Left ventricle myocardium inferior (tissue), 1 donor: ENCODE measurements at regions of chr21 and their contacts with region 1.

Region 1: GRCh38 chr21:31107871-31108270 is 69.6 kb upstream of the KRTAP19-8 start:
- DNase-seq: no peak
- H3K4me3 ChIP-seq: no peak overlapping the region
- H3K27ac ChIP-seq: peak overlapping the region; percentile 30
- H3K4me1 ChIP-seq: no peaks in the 10 kb centered on the region
- H3K27me3 ChIP-seq: peaks cover 38% of the 10 kb centered on the region
- CTCF ChIP-seq: no peak

Region 2: GRCh38 chr21:30882866-30883597 is 224.8 kb before region 1 on chr21:
- intact Hi-C with region 1: no loop called
- DNase-seq: no peak
- H3K4me3 ChIP-seq: no peak overlapping the region
- H3K27ac ChIP-seq: no peak overlapping the region
- H3K4me1 ChIP-seq: no peaks in the 10 kb centered on the region
- H3K27me3 ChIP-seq: no peaks in the 10 kb centered on the region
- CTCF ChIP-seq: no peak

Region 3: DNA sequence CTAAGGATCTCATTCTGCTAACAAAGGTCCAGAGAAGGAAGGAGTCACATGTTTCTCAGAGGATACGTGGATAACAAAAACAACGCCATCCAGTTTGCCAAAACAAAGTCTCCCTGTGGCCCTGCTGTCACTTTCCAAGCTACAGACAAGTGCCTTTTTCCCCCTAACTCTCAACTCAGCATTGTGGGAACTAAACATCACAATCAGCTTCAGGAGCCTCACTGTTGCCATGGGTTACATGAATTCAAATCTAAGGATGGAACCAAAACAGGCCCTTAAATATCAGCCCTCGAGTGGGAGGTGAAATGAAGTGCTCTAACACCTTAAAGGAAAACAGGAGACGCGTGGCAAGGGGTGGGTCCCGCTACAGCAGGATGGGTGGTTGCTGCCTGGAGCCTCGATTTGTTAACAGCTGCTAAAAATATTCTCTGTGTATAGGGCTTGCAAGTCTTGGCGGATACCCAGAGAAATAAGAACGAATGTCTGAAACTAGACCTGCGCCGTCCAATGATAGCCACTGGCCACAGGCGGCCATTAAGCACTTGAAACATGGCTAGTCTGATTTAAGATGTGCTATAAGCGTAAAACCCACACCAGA is 485.2 kb after region 1 on chr21:
- intact Hi-C with region 1: loop called (anchors 10 kb)
- DNase-seq: no peak
- H3K4me3 ChIP-seq: no peak overlapping the region
- H3K27ac ChIP-seq: no peak overlapping the region
- H3K4me1 ChIP-seq: peaks cover 10% of the 10 kb centered on the region
- H3K27me3 ChIP-seq: peaks cover 17% of the 10 kb centered on the region
- CTCF ChIP-seq: no peak